Mammary epithelial cell (primary cell): ENCODE measurements at regions of chr2 and their contacts with region 1.

Region 1: GRCh38 chr2:38190542-38191218 is 114.7 kb upstream of the CYP1B1 start:
- DNase-seq: peak; percentile 21
- H3K4me3 ChIP-seq: no peak overlapping the region
- H3K27ac ChIP-seq: no peak overlapping the region
- H3K4me1 ChIP-seq: peaks cover 16% of the 10 kb centered on the region
- H3K27me3 ChIP-seq: no peaks in the 10 kb centered on the region
- CTCF ChIP-seq: no peak

Region 2: DNA sequence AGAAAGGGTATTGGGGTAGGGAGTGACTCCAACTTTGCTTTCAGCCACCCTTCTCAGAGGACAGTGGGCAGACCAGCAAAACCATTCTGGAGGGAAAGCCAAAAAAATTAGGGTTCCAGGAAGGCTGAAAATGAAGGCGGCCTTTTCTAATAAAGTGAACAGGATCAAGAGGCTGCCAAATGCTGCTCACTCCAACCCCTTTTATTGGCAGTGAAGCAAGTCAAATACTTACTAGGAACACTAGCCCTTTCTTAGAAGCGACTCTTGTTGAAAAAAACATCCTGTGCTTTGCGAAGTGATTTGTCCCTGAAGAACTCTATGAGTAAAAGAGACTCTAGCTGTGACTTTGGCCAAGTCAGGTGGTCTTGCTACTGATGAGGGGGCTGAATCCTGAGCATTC is 31.1 kb before region 1 on chr2:
- CTCF ChIA-PET with region 1: no interaction called
- dilution Hi-C with region 1: loop called (anchors 5 kb)
- in situ Hi-C with region 1: no loop called
- intact Hi-C with region 1: no loop called
- DNase-seq: no peak
- H3K4me3 ChIP-seq: no peak overlapping the region
- H3K27ac ChIP-seq: no peak overlapping the region
- H3K4me1 ChIP-seq: no peaks in the 10 kb centered on the region
- H3K27me3 ChIP-seq: no peaks in the 10 kb centered on the region
- CTCF ChIP-seq: no peak